ENCODE measurements at regions of chr10 and their contacts with region 1.

Region 1: GRCh38 chr10:13074561-13075451 is 25.2 kb upstream of the OPTN start:
- DNase-seq: peak in 1 of 2 donors; percentile 76
- H3K4me3 ChIP-seq: no peak overlapping the region
- H3K27ac ChIP-seq: no peak overlapping the region
- H3K4me1 ChIP-seq: no peaks in the 10 kb centered on the region
- H3K27me3 ChIP-seq: no peaks in the 10 kb centered on the region
- CTCF ChIP-seq: peak; percentile 62 to 87 (median 74)

Region 2: DNA sequence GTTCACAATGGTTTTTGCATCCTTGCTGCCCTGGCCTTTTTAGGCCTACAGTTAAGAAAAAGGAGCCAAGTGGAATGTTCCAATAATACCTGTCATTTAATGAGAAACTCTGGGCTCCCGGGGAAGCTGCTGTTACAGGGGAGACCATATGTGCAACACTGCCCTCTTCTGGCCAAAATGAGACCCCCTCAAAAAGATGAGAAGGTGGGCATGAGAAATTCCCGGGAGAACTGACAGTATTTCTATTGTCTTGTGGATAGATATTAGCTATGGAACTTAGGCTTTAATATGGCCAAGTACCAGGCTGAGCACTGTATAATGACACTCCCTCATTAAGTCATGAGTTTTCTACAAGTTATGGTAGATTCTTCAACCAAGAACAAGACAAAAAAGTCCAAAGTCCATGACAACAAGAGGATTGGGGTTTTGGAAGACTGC is 172.7 kb before region 1 on chr10:
- intact Hi-C with region 1: loop called (anchors 2 kb)
- DNase-seq: no peak
- H3K4me3 ChIP-seq: no peak overlapping the region
- H3K27ac ChIP-seq: peak overlapping the region; percentile 90 to 91
- H3K4me1 ChIP-seq: peaks cover 4 to 26% of the 10 kb centered on the region in 2 donors
- H3K27me3 ChIP-seq: no peaks in the 10 kb centered on the region
- CTCF ChIP-seq: peak; percentile 4 to 68 (median 56)

Region 3: DNA sequence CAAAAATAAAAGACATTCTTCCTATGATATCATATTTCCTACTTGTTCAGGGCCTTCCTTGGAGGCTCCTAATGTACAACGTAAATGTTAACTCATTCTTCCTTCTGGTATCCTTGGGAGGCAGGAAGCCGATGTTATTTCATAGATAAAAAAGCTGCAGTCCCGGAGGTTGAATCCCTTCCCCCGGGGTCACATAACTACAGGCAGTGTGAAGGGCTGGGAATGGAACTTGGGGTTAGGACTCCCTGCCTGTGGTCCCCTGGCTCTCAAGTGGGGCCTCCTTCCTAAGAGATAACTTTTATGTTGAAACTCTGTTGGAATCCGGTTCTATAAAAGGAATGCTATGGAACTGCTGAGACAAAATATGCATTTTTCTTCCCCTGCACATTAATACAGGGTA is 58.4 kb before region 1 on chr10:
- intact Hi-C with region 1: no loop called
- DNase-seq: no peak
- H3K4me3 ChIP-seq: no peak overlapping the region
- H3K27ac ChIP-seq: no peak overlapping the region
- H3K4me1 ChIP-seq: no peaks in the 10 kb centered on the region
- H3K27me3 ChIP-seq: no peaks in the 10 kb centered on the region
- CTCF ChIP-seq: no peak

Measured in ascending aorta (tissue), 2 donors.